ENCODE measurements at regions of chr1 and their contacts with region 1.

Region 1: DNA sequence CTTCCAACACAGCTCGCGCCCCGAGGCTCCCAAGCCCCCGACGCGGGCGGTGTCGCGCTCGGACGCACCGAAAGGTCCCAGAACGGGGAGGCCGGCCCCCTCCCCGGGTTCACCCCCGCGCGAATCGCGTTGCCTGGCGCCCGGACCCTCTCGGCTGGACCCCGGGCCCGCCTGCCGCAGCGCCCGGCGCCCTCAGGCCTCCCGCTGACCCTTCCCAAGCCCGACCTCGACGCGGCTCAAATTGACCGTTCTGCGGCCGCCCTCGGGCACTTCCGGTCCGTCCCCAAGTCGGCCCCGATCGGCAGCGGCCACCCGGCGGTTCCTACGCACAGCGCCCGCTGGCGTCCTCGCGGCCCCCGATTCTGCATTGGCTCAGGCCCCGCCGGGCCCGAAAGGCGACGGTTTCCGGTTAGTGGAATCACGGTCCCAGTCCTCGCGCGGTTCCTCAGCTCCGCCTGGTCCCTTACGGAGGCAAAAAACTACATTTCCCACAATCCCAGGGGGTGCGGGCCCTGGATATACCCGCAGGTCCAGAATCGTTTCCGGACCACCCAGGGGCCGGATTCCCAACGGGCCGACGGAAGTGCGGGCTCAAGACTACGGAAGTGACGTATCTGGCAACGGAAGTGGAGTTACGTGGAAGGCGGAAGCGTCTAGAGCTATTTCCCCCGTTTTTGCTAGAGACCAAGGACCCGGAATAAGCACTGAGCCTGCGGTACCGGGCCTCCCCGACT is at the start of gene AURKAIP1:
- DNase-seq: peak; percentile 99
- H3K4me3 ChIP-seq: peak within 1 kb of the TSS; percentile 71 to 99 (median 86)
- H3K27ac ChIP-seq: peak within 1 kb of the TSS; percentile 88 to 97 (median 95)
- H3K4me1 ChIP-seq: peaks cover 32 to 45% (median 43%) of the 10 kb centered on the region in 4 donors
- H3K27me3 ChIP-seq: no peaks in the 10 kb centered on the region
- CTCF ChIP-seq: peak in 2 of 3 experiments; percentile 35 to 47
- EP300 ChIP-seq: no peak
- POLR2A ChIP-seq: no peak
- total RNA-seq, gene AURKAIP1: 98.4 to 152 (median 117) TPM

Region 2: GRCh38 chr1:1063945-1064831 is 310.9 kb before region 1 on chr1:
- intact Hi-C with region 1: no loop called
- DNase-seq: no peak
- H3K4me3 ChIP-seq: no peak overlapping the region
- H3K27ac ChIP-seq: no peak overlapping the region
- H3K4me1 ChIP-seq: peaks cover 27 to 51% (median 44%) of the 10 kb centered on the region in 4 donors
- H3K27me3 ChIP-seq: peaks cover 7 to 89% (median 46%) of the 10 kb centered on the region in 4 donors
- CTCF ChIP-seq: peak; percentile 88 to 95 (median 91)
- EP300 ChIP-seq: no peak
- POLR2A ChIP-seq: no peak

Region 3: DNA sequence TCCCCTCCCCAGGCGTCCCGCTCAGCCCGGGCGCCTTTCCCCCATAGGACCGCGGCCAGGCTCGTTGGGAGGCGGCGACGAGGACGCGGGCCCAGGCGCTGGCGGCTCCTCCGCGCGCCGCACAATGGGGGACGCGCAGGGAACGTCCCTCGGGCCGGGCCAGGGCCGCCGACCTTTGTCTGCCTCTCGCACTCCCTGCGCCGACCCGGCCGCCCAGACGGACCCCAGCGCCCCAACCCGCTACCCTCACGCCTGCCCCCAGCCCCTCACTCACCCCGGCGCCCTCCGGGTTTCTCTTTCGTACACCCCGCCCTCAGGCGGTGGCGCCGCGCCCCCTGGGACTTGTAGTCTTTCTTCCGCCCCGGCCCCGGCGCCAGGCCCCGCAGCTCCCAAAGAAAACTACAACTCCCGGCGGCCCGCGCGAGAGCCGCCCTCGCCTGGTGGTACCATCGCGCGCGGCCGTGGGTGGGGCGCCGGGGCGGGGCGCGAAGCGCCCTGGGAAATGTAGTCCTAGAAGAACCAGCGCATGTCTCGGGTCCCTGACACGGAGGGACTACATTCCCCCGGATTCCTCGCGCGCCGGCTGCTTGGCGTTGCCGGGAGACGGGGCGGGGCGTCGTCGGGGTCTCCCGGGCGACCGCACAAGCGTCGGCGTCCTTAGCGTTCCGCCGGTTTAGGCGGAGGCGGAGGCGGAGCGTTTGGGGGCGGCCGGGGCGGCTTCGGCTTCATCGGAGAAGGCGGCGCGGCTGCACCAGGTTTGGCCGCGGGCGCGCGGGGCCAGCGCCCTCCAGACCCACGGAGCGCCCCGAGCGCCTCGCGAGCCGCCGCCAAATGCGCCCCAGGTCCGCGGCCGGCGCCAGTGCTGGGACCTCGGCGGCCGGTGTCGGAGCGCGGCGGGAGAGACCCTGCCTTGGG is 259.1 kb before region 1 on chr1 and contains the start of gene C1orf159:
- intact Hi-C with region 1: loop called (anchors 10 kb)
- DNase-seq: peak; percentile 100
- H3K4me3 ChIP-seq: peak within 1 kb of the TSS; percentile 79 to 98 (median 98)
- H3K27ac ChIP-seq: peak within 1 kb of the TSS; percentile 78 to 87 (median 84)
- H3K4me1 ChIP-seq: peaks cover 6 to 27% (median 21%) of the 10 kb centered on the region in 4 donors
- H3K27me3 ChIP-seq: peaks cover 0 to 39% (median under 1%) of the 10 kb centered on the region in 4 donors
- CTCF ChIP-seq: peak in 1 of 3 experiments; percentile 33
- EP300 ChIP-seq: no peak
- POLR2A ChIP-seq: no peak
- total RNA-seq, gene C1orf159: 4.2 to 11.9 (median 8.5) TPM

Region 4: DNA sequence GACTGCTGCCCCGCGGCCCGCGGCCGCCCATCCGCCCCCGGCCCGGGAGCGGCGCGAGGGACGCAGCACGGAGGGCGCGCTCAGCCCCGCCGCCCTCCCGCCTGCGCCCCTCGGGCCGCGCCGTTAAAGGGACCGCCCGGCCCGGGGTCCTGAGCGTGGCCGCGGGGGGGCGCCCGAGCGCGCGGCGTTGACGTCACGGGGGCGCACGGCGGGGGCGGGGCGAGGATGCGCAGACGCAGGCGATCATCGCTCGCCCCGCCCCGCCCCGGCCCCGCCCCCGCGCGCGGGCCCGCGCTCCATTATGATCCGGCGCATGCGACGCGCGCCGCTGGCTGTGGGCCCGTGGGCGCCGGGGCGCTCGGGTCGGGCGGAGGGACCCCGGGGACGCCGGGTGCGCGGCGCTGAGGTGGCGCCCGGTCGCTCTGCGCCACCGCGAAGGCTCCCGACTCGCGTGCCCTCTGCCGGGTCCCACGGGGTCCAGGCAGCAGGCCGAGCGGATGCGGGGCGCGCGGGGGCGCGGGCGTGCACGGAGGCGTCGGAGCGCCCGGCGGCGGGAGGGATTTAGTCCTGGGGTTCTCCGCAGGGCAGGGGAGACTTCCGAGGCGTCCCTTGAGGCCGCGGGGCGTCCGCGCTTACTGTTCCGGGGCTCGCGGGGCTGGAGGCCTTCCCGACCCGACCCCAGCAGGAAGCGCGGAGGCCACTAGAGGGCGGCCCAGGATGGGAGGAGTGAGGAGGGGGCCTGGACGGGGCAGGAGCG is 25.7 kb before region 1 on chr1 and contains the start of gene DVL1:
- intact Hi-C with region 1: loop called (anchors 2 kb)
- DNase-seq: no peak
- H3K4me3 ChIP-seq: peak within 1 kb of the TSS; percentile 68 to 93 (median 82)
- H3K27ac ChIP-seq: peak within 1 kb of the TSS; percentile 89 to 92 (median 90)
- H3K4me1 ChIP-seq: peaks cover 65 to 76% (median 74%) of the 10 kb centered on the region in 4 donors
- H3K27me3 ChIP-seq: peaks cover 0 to 18% (median 11%) of the 10 kb centered on the region in 4 donors
- CTCF ChIP-seq: peak; percentile 49 to 65 (median 54)
- EP300 ChIP-seq: no peak
- POLR2A ChIP-seq: no peak
- total RNA-seq, gene DVL1: 66.9 to 141 (median 114) TPM

Region 5: GRCh38 chr1:1399187-1399871 is 24.2 kb after region 1 on chr1 and contains the start of gene CCNL2:
- intact Hi-C with region 1: loop called (anchors 2 kb)
- DNase-seq: peak; percentile 99
- H3K4me3 ChIP-seq: peak within 1 kb of the TSS; percentile 87 to 100 (median 97)
- H3K27ac ChIP-seq: peak within 1 kb of the TSS; percentile 88 to 92 (median 88)
- H3K4me1 ChIP-seq: peaks cover 43 to 62% (median 47%) of the 10 kb centered on the region in 4 donors
- H3K27me3 ChIP-seq: no peaks in the 10 kb centered on the region
- CTCF ChIP-seq: peak; percentile 61 to 80 (median 68)
- EP300 ChIP-seq: no peak
- POLR2A ChIP-seq: peak; percentile 60
- total RNA-seq, gene CCNL2: 73.4 to 136 (median 108) TPM